K562 (cell line): ENCODE measurements at regions of chr1 and their contacts with region 1.

Region 1: DNA sequence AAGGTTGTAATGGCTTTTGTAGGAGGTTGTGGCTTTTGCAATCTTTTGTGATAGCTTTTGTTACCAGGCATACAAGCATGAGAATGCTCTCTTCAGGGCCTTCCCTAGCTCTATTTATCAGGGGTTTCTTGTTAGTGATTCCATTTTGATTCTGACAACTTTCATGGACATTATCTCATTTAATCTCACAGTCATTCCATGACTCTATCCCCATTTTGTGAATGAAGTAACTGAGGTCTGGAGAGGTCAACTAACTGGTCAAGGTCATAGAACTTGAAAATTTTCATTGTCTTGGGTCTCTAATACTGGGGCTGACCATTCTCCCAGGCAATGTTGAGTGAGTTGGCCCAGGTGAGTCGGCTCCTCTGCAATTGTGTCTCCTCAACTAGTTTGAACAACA is 11.2 kb upstream of the LAMTOR5 start:
- DNase-seq: no peak
- ATAC-seq: no peak
- H3K4me3 ChIP-seq: no peak overlapping the region
- H3K27ac ChIP-seq: no peak overlapping the region
- H3K4me1 ChIP-seq: peaks cover 0 to 22% of the 10 kb centered on the region in 2 experiments; a peak in 4 of 5 replicates
- H3K27me3 ChIP-seq: peaks cover 0 to 4% of the 10 kb centered on the region in 2 experiments; a peak in 1 of 5 replicates
- CTCF ChIP-seq: no peak
- EP300 ChIP-seq: no peak
- POLR2A ChIP-seq: no peak
- RAD21 ChIP-seq: no peak

Region 2: GRCh38 chr1:110449661-110450651 is 31.2 kb after region 1 on chr1:
- CTCF ChIA-PET with region 1: interaction called, 40 read pairs
- POLR2A ChIA-PET with region 1: interaction called, 4 read pairs
- in situ Hi-C with region 1: loop called (anchors 5 kb)
- intact Hi-C with region 1: no loop called
- DNase-seq: peak in 2 of 4 experiments; percentile 56 to 65
- ATAC-seq: no peak
- H3K4me3 ChIP-seq: no peak overlapping the region
- H3K27ac ChIP-seq: no peak overlapping the region
- H3K4me1 ChIP-seq: peaks cover 0 to 4% of the 10 kb centered on the region in 2 experiments; a peak in 2 of 5 replicates
- H3K27me3 ChIP-seq: peaks cover 63 to 75% of the 10 kb centered on the region in 2 experiments
- CTCF ChIP-seq: no peak
- EP300 ChIP-seq: no peak
- POLR2A ChIP-seq: no peak
- RAD21 ChIP-seq: no peak